ENCODE measurements at regions of chr10 and their contacts with region 1.

Region 1: DNA sequence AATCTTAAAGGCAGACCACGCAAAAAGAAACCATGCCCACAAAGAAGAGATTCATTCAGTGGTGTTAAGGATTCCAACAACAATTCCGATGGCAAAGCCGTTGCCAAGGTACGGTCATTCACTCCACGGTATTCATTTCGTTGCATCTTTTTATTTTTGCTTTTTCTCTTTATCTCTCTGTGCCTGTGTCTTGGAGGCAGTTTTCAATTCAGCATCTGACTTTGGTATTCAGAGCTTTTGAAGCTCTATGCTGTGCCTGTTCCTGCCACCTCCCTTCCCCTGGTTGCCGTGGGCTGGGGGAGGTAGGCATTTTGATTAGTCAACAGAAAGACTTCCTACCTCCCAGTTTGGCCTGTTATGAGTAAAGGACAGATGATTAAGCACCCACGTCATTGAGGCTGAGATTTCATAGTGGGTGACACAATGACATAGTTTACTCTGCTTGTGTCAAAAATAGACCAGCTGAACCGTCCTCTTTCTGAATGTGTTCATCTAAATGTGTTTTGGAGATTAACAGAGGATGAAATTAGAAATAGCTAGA is 149.5 kb downstream of the ARID5B start:
- DNase-seq: peak; percentile 58 to 80 (median 74)
- ATAC-seq: peak; percentile 68 to 83 (median 80)
- H3K4me3 ChIP-seq: peak overlapping the region; percentile 24 to 75 (median 62)
- H3K27ac ChIP-seq: peak overlapping the region; percentile 87 to 99 (median 96)
- H3K4me1 ChIP-seq: peaks cover 19 to 96% (median 73%) of the 10 kb centered on the region in 12 donors
- H3K27me3 ChIP-seq: no peaks in the 10 kb centered on the region
- CTCF ChIP-seq: no peak
- POLR2A ChIP-seq: peak in 1 of 2 donors; percentile 89

Region 2: GRCh38 chr10:61896854-61897661 is 153.9 kb before region 1 on chr10:
- intact Hi-C with region 1: loop called in 1 of 10 experiments (anchors 5 kb)
- DNase-seq: peak; percentile 48 to 78 (median 64)
- ATAC-seq: peak; percentile 74 to 89 (median 86)
- H3K4me3 ChIP-seq: peak overlapping the region; percentile 10 to 57 (median 46)
- H3K27ac ChIP-seq: peak overlapping the region in 11 of 12 donors; percentile 31 to 77 (median 61)
- H3K4me1 ChIP-seq: peaks cover 0 to 38% (median 17%) of the 10 kb centered on the region in 12 donors
- H3K27me3 ChIP-seq: no peaks in the 10 kb centered on the region
- CTCF ChIP-seq: peak; percentile 55 to 79 (median 70)
- POLR2A ChIP-seq: no peak

Region 3: GRCh38 chr10:62082729-62083411 is 31.9 kb after region 1 on chr10:
- intact Hi-C with region 1: loop called in 6 of 10 experiments (anchors 2 to 5 kb)
- DNase-seq: peak in 1 of 5 donors; percentile 37
- ATAC-seq: peak; percentile 33 to 60 (median 52)
- H3K4me3 ChIP-seq: peak overlapping the region in 8 of 12 donors; percentile 2 to 30 (median 10)
- H3K27ac ChIP-seq: peak overlapping the region; percentile 76 to 92 (median 88)
- H3K4me1 ChIP-seq: peaks cover 9 to 74% (median 58%) of the 10 kb centered on the region in 12 donors
- H3K27me3 ChIP-seq: no peaks in the 10 kb centered on the region
- CTCF ChIP-seq: no peak
- POLR2A ChIP-seq: no peak

Region 4: GRCh38 chr10:62095181-62096071 is 44.5 kb after region 1 on chr10:
- intact Hi-C with region 1: loop called in 3 of 10 experiments (anchors 5 to 10 kb)
- DNase-seq: no peak
- ATAC-seq: peak in 1 of 4 donors; percentile 39
- H3K4me3 ChIP-seq: no peak overlapping the region
- H3K27ac ChIP-seq: peak overlapping the region in 11 of 12 donors; percentile 15 to 76 (median 55)
- H3K4me1 ChIP-seq: peaks cover 0 to 49% (median 26%) of the 10 kb centered on the region in 12 donors
- H3K27me3 ChIP-seq: no peaks in the 10 kb centered on the region
- CTCF ChIP-seq: no peak
- POLR2A ChIP-seq: no peak

Region 5: DNA sequence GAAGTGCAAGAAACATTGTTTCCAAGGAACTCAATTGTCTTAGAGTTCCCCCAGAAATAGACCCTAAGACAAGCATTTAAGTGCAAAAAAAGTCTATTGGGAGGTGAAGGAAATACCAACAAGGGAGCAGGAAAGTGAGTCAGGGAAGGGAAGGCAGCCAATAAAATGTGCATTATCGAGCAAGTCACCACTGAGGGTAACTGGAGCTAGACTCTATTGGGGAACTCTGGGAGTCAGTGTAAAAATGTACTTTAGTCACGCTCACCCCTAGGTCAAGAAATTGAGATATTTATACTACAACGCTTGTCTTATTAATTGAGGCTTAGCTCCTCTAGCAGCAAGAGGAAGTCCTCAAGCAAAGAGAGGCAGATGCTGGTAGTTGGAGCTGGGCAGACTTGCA is 80.0 kb after region 1 on chr10:
- intact Hi-C with region 1: loop called in 2 of 10 experiments (anchors 5 to 10 kb)
- DNase-seq: peak in 3 of 5 donors; percentile 33 to 61 (median 35)
- ATAC-seq: peak; percentile 51 to 95 (median 87)
- H3K4me3 ChIP-seq: no peak overlapping the region
- H3K27ac ChIP-seq: peak overlapping the region in 11 of 12 donors; percentile 21 to 75 (median 56)
- H3K4me1 ChIP-seq: peaks cover 0 to 20% (median 8%) of the 10 kb centered on the region in 12 donors
- H3K27me3 ChIP-seq: no peaks in the 10 kb centered on the region
- CTCF ChIP-seq: no peak
- POLR2A ChIP-seq: no peak

Measured in heart left ventricle (tissue), 16 donors.